B cell (primary cell): ENCODE measurements at regions of chr20 and their contacts with region 1.

Region 1: GRCh38 chr20:58650776-58651558 is at the start of gene STX16:
- DNase-seq: peak; percentile 91
- ATAC-seq: peak; percentile 74
- H3K4me3 ChIP-seq: peak within 1 kb of the TSS; percentile 87 to 99 (median 94)
- H3K4me3 Mint-ChIP-seq: peak within 1 kb of the TSS; percentile 100
- H3K27ac ChIP-seq: peak within 1 kb of the TSS; percentile 84 to 95
- H3K27ac Mint-ChIP-seq: peak within 1 kb of the TSS; percentile 97
- H3K4me1 ChIP-seq: peaks cover 14 to 20% of the 10 kb centered on the region in 2 donors
- H3K4me1 Mint-ChIP-seq: peaks cover 23% of the 10 kb centered on the region
- H3K27me3 ChIP-seq: peaks cover 0 to 3% (median 0%) of the 10 kb centered on the region in 4 experiments
- H3K27me3 Mint-ChIP-seq: no peaks in the 10 kb centered on the region
- CTCF ChIP-seq: peak; percentile 75
- total RNA-seq, gene STX16: 106 and 117 TPM in 2 replicates

Region 2: DNA sequence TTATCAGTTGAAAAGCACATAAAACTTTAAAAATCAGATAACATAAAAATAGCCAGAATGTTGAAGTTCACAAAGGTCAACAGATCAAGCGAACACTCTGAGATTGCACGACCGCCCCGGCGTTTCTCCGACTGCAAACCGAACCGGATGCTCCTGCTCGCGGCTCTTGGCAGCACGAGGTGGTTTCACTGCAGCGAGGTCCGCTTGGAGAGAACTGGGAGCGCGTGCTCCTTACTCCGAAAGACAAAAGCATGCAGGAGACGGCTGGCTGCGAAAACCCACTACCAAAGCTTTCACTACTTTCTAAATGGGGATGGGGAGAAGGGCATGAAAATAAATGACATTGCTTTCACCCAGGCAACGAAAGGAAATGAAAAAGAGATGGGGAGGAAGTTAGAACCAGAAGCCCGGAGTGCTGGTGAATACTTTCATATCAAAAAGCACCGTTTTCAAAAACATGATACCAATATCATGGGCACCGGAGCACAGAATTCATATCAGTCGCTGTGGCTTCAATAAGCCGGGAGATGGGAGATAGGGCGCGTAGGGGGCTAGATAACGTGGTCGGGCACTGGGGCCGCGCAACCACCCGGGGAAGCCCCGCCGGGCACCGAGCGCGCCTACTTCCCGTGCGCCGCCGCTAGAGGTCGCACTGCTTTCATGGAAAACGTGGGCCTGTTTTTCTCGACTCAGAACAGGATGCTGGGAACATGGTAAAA is 414.2 kb before region 1 on chr20:
- CTCF ChIA-PET with region 1: interaction called, 19 read pairs
- POLR2A ChIA-PET with region 1: interaction called, 4 read pairs
- intact Hi-C with region 1: loop called (anchors 2 kb)
- DNase-seq: peak; percentile 83
- ATAC-seq: peak; percentile 92
- H3K4me3 ChIP-seq: peak overlapping the region; percentile 63 to 88 (median 71)
- H3K4me3 Mint-ChIP-seq: peak overlapping the region; percentile 93
- H3K27ac ChIP-seq: peak overlapping the region; percentile 27 to 73
- H3K27ac Mint-ChIP-seq: peak overlapping the region; percentile 79
- H3K4me1 ChIP-seq: peaks cover 0 to 3% of the 10 kb centered on the region in 2 donors
- H3K4me1 Mint-ChIP-seq: peaks cover 8% of the 10 kb centered on the region
- H3K27me3 ChIP-seq: no peaks in the 10 kb centered on the region
- H3K27me3 Mint-ChIP-seq: no peaks in the 10 kb centered on the region
- CTCF ChIP-seq: peak; percentile 98

Region 3: DNA sequence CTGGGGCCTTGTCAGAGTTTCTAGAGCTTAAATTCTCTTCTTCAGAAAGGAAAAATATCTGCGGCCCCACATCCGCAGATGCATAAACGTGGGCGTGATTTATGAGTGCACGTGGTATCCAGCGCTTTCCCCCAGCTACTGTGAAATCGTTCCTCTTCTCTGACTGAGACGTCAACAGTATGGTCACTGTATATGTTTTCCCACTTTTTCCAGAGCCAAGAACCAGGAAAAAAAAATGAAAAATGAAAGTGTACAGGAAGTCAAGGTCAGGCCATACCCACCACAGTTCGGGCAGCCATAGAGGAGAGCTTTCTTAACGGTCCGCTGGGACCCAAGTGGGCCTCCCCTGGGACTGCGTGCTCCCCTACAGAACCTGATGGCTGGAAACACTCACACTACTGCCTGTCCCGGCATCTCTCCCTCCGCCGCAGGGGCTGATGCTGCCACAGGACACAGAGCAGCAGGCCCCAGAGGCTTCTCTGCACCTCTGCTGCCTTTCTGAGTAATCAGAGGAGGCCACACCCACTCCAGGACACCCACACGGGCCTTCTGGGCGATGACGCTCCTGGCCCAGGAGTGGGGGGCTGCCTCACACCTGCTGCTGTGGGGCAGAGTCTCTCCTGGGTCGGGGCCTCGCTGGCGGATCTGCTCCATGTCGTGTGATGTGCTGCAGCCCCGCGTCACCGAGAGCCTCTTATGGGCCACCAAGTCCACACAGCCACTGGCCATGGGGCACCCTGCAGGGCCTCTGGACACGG is 16.3 kb before region 1 on chr20:
- CTCF ChIA-PET with region 1: no interaction called
- POLR2A ChIA-PET with region 1: interaction called, 4 read pairs
- intact Hi-C with region 1: loop called (anchors 2 kb)
- DNase-seq: peak; percentile 54
- ATAC-seq: peak; percentile 80
- H3K4me3 ChIP-seq: peak overlapping the region in 4 of 5 experiments; percentile 36 to 55 (median 46)
- H3K4me3 Mint-ChIP-seq: peak overlapping the region; percentile 90
- H3K27ac ChIP-seq: peak overlapping the region in 1 of 2 donors; percentile 25
- H3K27ac Mint-ChIP-seq: no peak overlapping the region
- H3K4me1 ChIP-seq: peaks cover 13 to 15% of the 10 kb centered on the region in 2 donors
- H3K4me1 Mint-ChIP-seq: peaks cover 14% of the 10 kb centered on the region
- H3K27me3 ChIP-seq: peaks cover 0 to 32% (median 12%) of the 10 kb centered on the region in 4 experiments
- H3K27me3 Mint-ChIP-seq: peaks cover 40% of the 10 kb centered on the region
- CTCF ChIP-seq: no peak

Region 4: DNA sequence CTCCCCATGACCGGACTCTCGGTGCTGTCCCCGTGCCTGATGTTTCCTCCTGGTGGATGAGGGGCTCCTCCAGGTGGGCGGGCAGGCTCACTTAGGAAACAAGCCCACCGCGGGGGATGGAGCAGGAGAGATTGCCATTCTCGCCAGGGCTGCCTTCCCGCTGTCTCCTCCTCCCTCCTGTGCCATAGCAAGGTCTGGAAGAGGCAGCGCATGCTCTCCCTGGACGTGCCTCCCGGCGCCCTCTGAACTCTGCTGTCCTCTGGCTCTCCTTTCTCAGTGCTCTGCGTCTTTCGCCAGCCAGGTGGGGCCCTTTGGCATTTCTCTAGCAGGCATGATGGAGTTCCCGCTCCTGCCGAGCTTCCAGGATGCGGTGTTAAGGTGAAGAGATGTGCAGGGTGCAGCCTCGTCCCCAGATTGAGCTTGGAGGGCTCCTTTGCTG is 24.2 kb after region 1 on chr20:
- CTCF ChIA-PET with region 1: no interaction called
- POLR2A ChIA-PET with region 1: no interaction called
- intact Hi-C with region 1: no loop called
- DNase-seq: no peak
- ATAC-seq: no peak
- H3K4me3 ChIP-seq: no peak overlapping the region
- H3K4me3 Mint-ChIP-seq: no peak overlapping the region
- H3K27ac ChIP-seq: no peak overlapping the region
- H3K27ac Mint-ChIP-seq: no peak overlapping the region
- H3K4me1 ChIP-seq: no peaks in the 10 kb centered on the region
- H3K4me1 Mint-ChIP-seq: peaks cover 2% of the 10 kb centered on the region
- H3K27me3 ChIP-seq: no peaks in the 10 kb centered on the region
- H3K27me3 Mint-ChIP-seq: no peaks in the 10 kb centered on the region
- CTCF ChIP-seq: no peak

Region 5: DNA sequence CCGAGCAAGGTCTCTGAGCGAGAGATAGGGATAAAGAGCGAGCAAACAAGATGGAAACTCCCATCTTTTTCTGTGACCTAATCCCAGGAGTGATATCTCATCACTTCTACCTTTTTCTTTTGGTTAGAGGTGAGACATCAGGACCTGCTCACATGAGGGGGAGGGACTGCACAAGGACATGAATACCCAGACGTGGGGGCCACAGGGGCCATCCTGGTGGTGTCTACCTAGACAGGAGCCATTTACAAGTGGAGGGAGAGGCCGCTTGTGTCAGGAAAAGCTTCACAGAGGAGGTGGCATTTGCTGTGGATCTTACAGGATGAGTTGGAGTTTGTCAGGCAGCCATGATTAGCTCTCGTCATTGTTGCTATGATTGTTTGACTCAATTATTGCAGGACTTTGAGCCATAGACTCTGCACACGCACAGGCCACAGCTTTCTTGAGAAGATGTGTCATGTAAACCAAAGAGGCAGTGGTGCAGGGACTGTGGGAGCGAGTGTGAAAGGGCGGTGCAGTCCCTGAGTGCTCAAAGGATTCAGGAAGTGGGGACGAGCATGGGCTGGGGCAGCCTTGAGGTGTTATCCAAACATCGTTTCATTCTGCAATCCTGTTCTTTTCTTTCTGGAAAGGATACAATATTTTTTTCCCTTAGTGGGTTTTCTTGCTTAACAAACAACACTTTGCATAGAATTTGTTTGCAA is 49.3 kb after region 1 on chr20:
- CTCF ChIA-PET with region 1: no interaction called
- POLR2A ChIA-PET with region 1: no interaction called
- intact Hi-C with region 1: no loop called
- DNase-seq: no peak
- ATAC-seq: no peak
- H3K4me3 ChIP-seq: no peak overlapping the region
- H3K4me3 Mint-ChIP-seq: no peak overlapping the region
- H3K27ac ChIP-seq: no peak overlapping the region
- H3K27ac Mint-ChIP-seq: no peak overlapping the region
- H3K4me1 ChIP-seq: no peaks in the 10 kb centered on the region
- H3K4me1 Mint-ChIP-seq: no peaks in the 10 kb centered on the region
- H3K27me3 ChIP-seq: no peaks in the 10 kb centered on the region
- H3K27me3 Mint-ChIP-seq: no peaks in the 10 kb centered on the region
- CTCF ChIP-seq: no peak

Region 6: DNA sequence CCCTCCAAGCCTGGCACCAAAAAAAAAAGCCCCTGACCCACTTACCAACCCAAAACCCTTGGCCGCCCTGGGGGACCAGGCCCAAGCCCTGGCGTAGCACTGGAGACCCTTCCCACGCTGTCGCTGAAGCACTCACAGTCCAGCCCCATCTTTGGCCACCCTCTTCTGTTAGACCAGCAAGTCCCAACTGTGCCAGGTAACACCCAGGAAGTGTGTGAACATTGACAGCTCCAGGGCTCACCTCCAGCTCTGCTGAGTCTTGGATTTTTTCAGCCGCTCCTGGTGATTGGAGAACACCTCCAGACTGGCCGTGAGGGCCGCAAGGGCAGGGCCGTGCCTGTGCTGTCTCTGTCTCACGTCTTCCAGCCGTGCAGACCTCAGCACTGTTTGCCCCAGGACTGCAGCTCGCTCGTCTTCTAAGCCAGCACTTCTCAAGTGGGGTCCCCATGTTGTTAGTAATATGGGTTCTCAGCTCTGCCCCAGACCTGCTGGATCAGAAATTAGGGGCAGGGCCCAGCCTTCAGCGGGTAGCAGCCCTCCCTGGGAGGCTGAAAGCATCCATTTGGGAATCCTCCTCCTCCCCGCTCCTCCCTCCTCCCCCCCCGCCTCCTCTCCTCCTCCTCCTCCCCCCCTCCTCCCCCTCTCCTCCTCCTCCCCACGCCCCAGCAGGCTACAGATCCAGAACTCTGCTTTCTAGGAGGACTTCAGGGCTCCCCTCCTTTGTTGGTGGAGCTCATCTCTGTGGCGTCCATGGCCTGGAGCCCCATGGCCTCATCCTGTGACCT is 59.7 kb after region 1 on chr20:
- CTCF ChIA-PET with region 1: no interaction called
- POLR2A ChIA-PET with region 1: no interaction called
- intact Hi-C with region 1: no loop called
- DNase-seq: no peak
- ATAC-seq: no peak
- H3K4me3 ChIP-seq: no peak overlapping the region
- H3K4me3 Mint-ChIP-seq: no peak overlapping the region
- H3K27ac ChIP-seq: no peak overlapping the region
- H3K27ac Mint-ChIP-seq: no peak overlapping the region
- H3K4me1 ChIP-seq: no peaks in the 10 kb centered on the region
- H3K4me1 Mint-ChIP-seq: no peaks in the 10 kb centered on the region
- H3K27me3 ChIP-seq: no peaks in the 10 kb centered on the region
- H3K27me3 Mint-ChIP-seq: no peaks in the 10 kb centered on the region
- CTCF ChIP-seq: no peak

Region 7: GRCh38 chr20:58850693-58851174 is 199.8 kb after region 1 on chr20 and contains the start of gene GNAS-AS1:
- CTCF ChIA-PET with region 1: interaction called, 6 read pairs
- POLR2A ChIA-PET with region 1: interaction called, 5 read pairs
- intact Hi-C with region 1: loop called (anchors 5 kb)
- DNase-seq: peak; percentile 76
- ATAC-seq: peak; percentile 89
- H3K4me3 ChIP-seq: peak within 1 kb of the TSS; percentile 31 to 58 (median 48)
- H3K4me3 Mint-ChIP-seq: peak within 1 kb of the TSS; percentile 93
- H3K27ac ChIP-seq: no peak within 1 kb of the TSS
- H3K27ac Mint-ChIP-seq: no peak within 1 kb of the TSS
- H3K4me1 ChIP-seq: peaks cover 35 to 51% of the 10 kb centered on the region in 2 donors
- H3K4me1 Mint-ChIP-seq: peaks cover 36% of the 10 kb centered on the region
- H3K27me3 ChIP-seq: peaks cover 0 to 66% (median 16%) of the 10 kb centered on the region in 4 experiments
- H3K27me3 Mint-ChIP-seq: peaks cover 42% of the 10 kb centered on the region
- CTCF ChIP-seq: no peak
- total RNA-seq, gene GNAS-AS1: 1.5 and 2.1 TPM in 2 replicates

Region 8: DNA sequence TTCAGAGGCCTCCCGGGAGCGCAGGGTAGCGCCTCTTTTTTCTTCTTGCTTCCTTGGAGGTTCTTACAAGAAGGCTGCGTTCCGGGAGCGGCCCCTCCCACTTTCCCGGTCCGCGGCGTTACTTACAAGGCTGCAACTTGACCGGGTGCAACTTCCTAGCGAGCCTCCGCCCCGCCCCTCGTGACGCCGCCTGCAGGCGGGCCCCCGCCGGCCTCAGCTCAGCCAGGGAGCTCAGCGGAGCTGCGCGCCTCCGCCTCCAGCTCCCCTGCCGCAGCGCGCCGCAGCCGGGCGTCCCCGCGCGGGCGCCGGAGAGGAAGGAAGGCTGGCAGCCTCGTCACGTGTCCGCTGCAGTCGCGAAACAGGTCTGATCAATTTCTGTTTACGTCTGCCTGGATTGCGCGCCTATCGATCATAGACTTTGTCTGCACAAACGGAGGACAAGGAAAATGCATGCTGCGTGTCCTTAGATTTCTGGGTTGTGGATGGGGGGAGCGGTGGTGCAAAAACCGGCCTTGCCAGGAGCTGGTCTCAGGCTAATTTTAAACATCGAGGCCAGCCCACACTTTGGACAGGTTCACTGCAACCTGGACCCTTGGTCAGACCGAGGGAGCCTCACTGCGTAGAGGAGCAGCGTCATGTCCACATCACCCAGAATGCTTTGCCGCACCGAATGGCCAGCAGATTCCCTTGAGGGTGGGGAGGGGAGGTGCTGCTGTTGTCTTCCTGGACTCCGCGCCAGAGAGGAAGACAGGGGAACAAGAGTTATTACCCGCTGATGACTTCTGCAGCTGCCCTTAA is 1289.4 kb after region 1 on chr20 and contains the starts of genes FAM217B and PPP1R3D:
- CTCF ChIA-PET with region 1: no interaction called
- POLR2A ChIA-PET with region 1: no interaction called
- intact Hi-C with region 1: loop called (anchors 5 kb)
- DNase-seq: peak; percentile 91
- ATAC-seq: peak; percentile 95
- H3K4me3 ChIP-seq: peak within 1 kb of the TSS; percentile 79 to 96 (median 84)
- H3K4me3 Mint-ChIP-seq: peak within 1 kb of the TSS; percentile 97
- H3K27ac ChIP-seq: peak within 1 kb of the TSS; percentile 72 to 87
- H3K27ac Mint-ChIP-seq: peak within 1 kb of the TSS; percentile 95
- H3K4me1 ChIP-seq: peaks cover 20 to 21% of the 10 kb centered on the region in 2 donors
- H3K4me1 Mint-ChIP-seq: peaks cover 37% of the 10 kb centered on the region
- H3K27me3 ChIP-seq: no peaks in the 10 kb centered on the region
- H3K27me3 Mint-ChIP-seq: no peaks in the 10 kb centered on the region
- CTCF ChIP-seq: no peak
- total RNA-seq, gene FAM217B: 22.1 and 34.9 TPM in 2 replicates
- total RNA-seq, gene PPP1R3D: 13.6 and 13.7 TPM in 2 replicates